A673 (cell line): ENCODE measurements at regions of chr19 and their contacts with region 1.

Region 1: DNA sequence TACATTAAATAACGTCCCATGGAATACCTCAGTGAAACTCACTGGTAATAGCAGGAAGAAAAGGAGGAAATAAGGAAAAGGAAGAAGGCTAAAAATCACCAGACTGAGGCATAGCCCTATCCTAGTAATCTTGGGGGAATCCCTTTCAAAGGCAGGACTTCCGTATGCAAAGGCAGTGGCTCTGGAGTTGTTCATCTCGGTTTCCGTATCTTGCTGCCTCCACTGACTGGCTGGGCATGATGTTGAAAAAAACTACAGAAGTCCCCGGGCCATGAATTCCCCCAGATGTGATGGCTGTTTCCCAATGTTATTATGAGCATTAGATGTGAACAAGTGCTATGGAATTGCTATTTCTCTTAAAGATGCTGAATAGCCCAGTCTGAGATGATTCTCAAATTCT is 5.5 kb downstream of the FPR2 start:
- DNase-seq: no peak
- H3K4me3 ChIP-seq: no peak overlapping the region
- H3K27ac ChIP-seq: no peak overlapping the region
- H3K4me1 ChIP-seq: no peaks in the 10 kb centered on the region
- H3K27me3 ChIP-seq: peaks cover 66% of the 10 kb centered on the region
- CTCF ChIP-seq: no peak

Region 2: DNA sequence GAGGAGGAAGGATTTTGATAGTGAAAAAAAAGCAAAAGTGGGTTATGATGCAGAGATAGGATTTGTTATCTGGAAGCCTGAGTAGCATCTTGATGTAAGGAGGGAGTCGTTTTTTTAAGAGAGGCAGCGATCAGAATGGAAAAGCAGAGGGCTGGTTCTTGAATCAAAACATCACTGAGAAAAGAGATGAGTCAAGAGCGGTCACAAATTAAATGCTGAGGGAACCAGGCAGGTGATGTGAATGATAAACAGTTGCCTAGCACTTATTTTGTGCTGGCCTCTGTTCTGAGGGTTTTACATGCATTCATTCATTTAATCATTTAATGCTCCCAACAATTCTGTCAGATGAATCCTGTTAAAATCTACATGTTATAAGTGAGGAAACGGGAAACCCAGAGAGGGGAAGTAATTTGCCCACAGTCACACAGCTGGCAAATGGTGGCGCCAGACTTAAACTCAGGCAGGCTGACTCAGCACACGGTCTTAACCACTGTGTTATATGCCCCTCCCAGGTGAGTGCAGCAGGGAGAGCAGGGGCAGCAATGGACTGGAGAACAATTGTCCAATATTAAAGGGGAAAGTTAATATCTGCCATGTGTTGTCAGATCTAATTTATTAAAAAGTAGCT is 494.2 kb before region 1 on chr19:
- CTCF ChIA-PET with region 1: no interaction called
- POLR2A ChIA-PET with region 1: no interaction called
- intact Hi-C with region 1: no loop called
- DNase-seq: peak; percentile 4
- H3K4me3 ChIP-seq: no peak overlapping the region
- H3K27ac ChIP-seq: no peak overlapping the region
- H3K4me1 ChIP-seq: no peaks in the 10 kb centered on the region
- H3K27me3 ChIP-seq: no peaks in the 10 kb centered on the region
- CTCF ChIP-seq: no peak

Region 3: DNA sequence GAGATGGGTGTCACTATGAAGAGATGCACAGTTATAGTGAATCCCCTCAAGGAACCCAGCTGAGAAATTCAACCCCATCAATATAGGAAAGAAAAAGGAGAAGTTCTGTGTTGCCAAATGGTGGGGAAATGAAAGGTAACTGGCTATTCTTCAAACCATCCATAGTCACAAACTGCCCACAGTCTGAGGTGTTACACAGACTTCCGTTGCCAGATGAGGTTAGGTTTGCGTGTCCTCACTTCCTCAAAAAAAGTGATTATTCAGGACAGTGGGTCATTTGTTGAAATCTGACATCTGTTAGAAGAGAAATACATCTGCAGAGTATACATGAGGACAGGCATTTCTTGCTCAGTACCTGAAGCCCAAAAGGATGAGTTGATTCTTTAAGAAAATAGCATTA is 145.3 kb before region 1 on chr19:
- CTCF ChIA-PET with region 1: no interaction called
- POLR2A ChIA-PET with region 1: no interaction called
- intact Hi-C with region 1: no loop called
- DNase-seq: no peak
- H3K4me3 ChIP-seq: no peak overlapping the region
- H3K27ac ChIP-seq: no peak overlapping the region
- H3K4me1 ChIP-seq: no peaks in the 10 kb centered on the region
- H3K27me3 ChIP-seq: peaks cover 57% of the 10 kb centered on the region
- CTCF ChIP-seq: no peak

Region 4: DNA sequence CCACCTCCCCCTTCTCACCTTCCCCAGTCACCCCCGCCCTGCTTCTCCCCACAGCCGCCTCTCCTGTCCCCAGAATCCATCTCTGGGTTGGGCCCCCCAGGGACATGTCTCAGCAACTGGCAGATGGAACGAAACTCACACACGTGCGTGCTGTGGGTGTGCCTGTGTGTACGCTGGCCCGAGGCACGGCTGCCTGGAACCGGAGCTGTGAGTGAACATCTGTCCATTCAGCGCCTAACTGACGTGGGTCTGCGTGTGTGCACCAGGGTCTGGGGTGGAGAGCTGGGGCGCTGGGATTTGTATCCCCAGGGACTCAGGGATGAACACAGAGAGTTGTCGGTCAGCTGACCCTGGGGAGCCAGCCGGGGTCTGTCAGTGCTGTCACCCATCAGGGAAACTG is 41.9 kb before region 1 on chr19:
- CTCF ChIA-PET with region 1: no interaction called
- POLR2A ChIA-PET with region 1: no interaction called
- intact Hi-C with region 1: loop called (anchors 5 kb)
- DNase-seq: no peak
- H3K4me3 ChIP-seq: no peak overlapping the region
- H3K27ac ChIP-seq: no peak overlapping the region
- H3K4me1 ChIP-seq: no peaks in the 10 kb centered on the region
- H3K27me3 ChIP-seq: peaks cover 96% of the 10 kb centered on the region
- CTCF ChIP-seq: no peak

Region 5: DNA sequence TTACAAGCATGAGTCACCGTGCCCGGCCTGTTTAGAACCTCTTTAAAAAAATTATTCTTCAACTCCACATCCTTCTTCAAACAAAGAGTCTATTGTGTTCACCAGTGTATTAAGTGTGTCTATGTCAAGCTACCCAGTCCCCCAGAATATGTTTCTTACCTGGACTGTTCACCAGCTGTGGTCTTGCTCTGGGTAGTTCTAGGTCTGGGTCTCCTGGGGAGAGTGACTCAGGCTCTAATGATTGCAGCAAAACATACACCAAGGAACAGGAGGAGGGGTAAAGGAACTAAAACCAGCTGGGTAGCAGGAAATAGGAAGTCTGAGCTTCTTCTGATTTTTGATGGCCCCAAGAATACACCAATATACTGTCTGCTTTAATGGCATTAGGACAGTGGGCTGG is 14.8 kb before region 1 on chr19 and contains the start of gene FPR1:
- CTCF ChIA-PET with region 1: no interaction called
- POLR2A ChIA-PET with region 1: no interaction called
- intact Hi-C with region 1: no loop called
- DNase-seq: peak; percentile 22
- H3K4me3 ChIP-seq: no peak within 1 kb of the TSS
- H3K27ac ChIP-seq: no peak within 1 kb of the TSS
- H3K4me1 ChIP-seq: no peaks in the 10 kb centered on the region
- H3K27me3 ChIP-seq: peaks cover 10% of the 10 kb centered on the region
- CTCF ChIP-seq: no peak
- total RNA-seq, gene FPR1: not detected in 2 replicates